Cardiac septum (tissue), 1 donor: ENCODE measurements at regions of chr7 and their contacts with region 1.

Region 1: DNA sequence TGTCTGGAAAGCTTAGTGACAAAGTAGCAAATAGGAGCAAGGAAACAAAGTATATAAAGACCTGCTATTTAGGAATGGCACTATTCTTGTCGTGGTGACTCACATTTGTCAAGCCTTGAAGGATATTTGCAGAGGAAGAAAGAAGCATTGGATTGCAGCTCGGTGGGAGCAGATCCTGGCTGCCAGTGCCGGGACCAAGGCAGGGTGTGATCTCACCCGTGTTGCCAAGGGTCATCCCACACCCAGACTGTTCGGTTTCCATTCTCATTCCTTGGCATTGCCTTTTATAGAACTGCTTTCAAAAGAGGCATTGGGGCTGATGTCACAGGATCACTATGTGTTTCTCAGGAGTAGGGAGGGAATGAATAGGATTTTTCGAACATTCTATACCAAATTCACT is 176.2 kb downstream of the GALNT17 start:
- DNase-seq: no peak

Region 2: DNA sequence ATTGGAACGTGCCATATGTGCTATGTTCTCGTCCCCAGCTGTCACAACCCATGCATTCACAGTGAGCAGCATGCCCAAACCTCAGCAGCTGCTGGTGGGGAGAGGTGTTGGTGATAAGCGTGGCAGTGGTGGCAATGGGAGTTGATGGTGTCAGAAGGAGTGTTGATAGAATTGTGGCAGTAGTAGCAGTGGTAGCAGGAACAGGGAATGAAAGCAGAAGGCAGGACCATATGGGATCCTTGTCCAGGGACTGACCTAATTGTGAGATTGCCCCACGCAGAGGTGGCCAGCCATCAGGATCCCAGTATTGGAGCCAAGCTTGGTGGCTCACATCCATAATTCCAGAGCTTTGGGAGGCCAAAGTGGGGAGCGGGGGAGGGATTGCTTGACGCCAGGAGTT is 100.2 kb after region 1 on chr7:
- intact Hi-C with region 1: loop called (anchors 10 kb)
- DNase-seq: peak; percentile 83